ENCODE measurements at regions of chr6 and their contacts with region 1.

Region 1: DNA sequence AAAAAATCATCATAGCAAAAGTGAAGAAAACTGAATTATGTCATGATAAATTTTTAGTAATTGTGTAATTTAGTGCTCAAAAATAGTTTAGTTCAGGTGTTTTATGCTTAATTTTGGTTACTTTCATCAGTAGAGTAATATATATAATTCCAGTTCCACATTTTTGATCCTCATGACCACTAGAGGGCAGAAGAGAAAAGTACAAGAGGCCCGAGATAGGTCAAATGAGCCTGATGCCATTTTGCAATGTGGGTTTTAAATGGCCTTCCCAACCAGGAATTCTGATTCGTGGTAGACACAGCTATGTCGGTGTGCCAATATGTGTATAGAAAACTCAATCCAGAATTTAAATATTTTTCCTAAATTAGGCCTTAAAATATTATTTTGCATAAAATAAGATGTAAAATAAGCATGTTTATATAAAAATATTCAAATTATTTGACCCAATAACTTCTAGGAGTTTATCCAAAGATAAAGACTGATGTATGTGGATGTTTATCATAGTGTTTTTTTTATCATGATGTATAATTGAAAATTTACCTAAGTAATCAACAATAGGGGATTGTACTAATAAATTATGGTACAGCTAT is 159.7 kb upstream of the RPS6KA2 start:
- DNase-seq: peak; percentile 37
- H3K4me3 Mint-ChIP-seq: no peak overlapping the region
- H3K27ac Mint-ChIP-seq: no peak overlapping the region
- H3K4me1 Mint-ChIP-seq: no peaks in the 10 kb centered on the region
- H3K27me3 Mint-ChIP-seq: peaks cover 25% of the 10 kb centered on the region
- CTCF ChIP-seq: peak; percentile 58

Region 2: DNA sequence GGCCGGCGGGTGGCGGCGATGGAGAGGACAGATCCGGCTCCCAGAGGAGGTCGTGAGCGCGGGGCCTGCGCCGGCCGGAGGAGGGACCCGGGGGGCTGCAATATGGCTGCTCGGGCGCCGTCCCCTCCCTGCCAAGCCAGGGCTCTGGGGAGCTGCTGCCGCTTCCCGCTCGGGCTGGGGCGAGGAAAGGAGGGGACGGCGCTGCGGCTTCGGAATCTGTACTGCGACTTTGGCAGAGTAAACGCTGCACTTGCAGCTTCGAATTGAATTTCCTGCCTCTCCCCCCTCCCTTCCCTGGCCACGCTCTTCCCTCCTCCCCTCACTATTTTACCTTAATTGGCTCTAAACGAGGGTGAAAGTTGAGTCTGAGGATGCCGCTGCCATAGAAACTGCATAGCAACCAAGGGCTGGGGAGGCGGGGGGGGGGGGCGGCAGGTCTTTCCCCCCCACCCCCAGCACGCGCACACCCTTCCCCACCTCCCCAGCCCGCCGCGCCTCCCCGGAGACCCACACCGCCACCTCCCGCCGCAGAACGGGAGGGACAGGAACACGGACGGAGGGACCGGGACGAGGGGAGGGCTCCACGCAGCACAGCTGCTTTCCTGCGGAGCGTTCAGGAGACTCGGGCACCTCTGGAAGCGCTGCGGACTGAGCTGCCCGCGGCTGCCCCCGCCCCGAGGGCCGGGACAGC is 75.6 kb after region 1 on chr6:
- CTCF ChIA-PET with region 1: no interaction called
- intact Hi-C with region 1: loop called (anchors 5 kb)
- DNase-seq: peak; percentile 39
- H3K4me3 Mint-ChIP-seq: peak overlapping the region; percentile 80
- H3K27ac Mint-ChIP-seq: no peak overlapping the region
- H3K4me1 Mint-ChIP-seq: no peaks in the 10 kb centered on the region
- H3K27me3 Mint-ChIP-seq: peaks cover 53% of the 10 kb centered on the region
- CTCF ChIP-seq: no peak

Region 3: DNA sequence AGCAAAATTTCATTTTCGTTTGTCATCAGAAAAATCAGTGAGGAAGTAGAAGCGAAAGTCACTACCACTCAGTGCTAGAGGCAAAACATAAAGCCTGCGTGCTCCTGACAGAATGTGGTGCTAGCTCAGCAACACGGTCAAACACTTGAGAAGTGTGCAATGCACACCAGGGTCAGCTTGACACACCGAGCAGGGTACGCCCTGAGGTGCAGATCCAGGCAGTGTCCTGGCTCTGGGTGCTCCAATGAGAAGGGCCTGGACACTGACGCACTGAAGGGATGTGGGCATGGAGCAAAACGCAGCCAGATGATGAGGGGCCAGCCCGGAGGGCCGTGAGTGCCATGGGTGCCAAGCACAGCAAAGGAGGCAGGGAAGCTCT is 163.6 kb after region 1 on chr6:
- CTCF ChIA-PET with region 1: interaction called, 14 read pairs
- intact Hi-C with region 1: loop called (anchors 1 kb)
- DNase-seq: no peak
- H3K4me3 Mint-ChIP-seq: peak overlapping the region; percentile 37
- H3K27ac Mint-ChIP-seq: peak overlapping the region; percentile 69
- H3K4me1 Mint-ChIP-seq: peaks cover 24% of the 10 kb centered on the region
- H3K27me3 Mint-ChIP-seq: no peaks in the 10 kb centered on the region
- CTCF ChIP-seq: no peak

Region 4: GRCh38 chr6:166989427-166990032 is 202.7 kb after region 1 on chr6:
- CTCF ChIA-PET with region 1: no interaction called
- intact Hi-C with region 1: loop called (anchors 2 kb)
- DNase-seq: peak; percentile 4
- H3K4me3 Mint-ChIP-seq: no peak overlapping the region
- H3K27ac Mint-ChIP-seq: no peak overlapping the region
- H3K4me1 Mint-ChIP-seq: no peaks in the 10 kb centered on the region
- H3K27me3 Mint-ChIP-seq: no peaks in the 10 kb centered on the region
- CTCF ChIP-seq: peak; percentile 17

Region 5: DNA sequence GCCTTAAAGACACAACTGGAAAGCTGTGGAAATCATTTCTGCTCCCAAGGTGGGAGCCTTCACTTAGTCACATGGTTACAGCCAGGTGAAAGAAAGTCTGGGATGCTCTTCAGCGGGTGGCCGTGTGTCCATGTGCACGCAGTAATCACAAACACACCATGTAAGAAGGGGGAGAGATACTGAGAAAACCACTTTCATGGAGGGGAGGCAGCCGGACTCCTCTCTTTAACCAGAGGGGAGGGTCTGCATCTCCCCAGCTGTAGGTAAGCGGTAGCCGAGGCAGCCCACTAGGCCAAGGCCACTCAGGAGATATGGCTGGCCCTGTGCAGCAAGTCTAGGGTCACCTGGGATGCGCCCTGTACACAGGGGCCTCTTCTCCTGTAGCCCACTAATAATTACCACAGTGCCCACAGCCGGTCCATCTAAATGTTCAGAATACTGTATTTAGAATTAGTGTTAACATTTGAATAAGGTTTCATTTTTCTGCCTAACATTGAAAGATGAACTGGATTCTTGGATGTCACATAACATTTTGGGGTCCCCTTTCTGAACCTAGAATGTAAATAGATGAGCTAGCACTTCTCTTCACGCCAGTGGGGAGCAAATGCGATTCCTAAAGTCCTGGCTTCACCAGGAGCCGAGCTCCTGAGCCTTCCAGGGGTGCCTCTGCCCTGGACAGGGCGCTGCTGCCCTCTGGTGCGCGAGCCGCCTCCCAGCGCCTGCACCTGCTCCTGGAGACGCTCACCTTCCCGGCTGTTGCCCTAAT is 355.1 kb after region 1 on chr6:
- CTCF ChIA-PET with region 1: no interaction called
- intact Hi-C with region 1: loop called (anchors 1 kb)
- DNase-seq: peak; percentile 76
- H3K4me3 Mint-ChIP-seq: no peak overlapping the region
- H3K27ac Mint-ChIP-seq: no peak overlapping the region
- H3K4me1 Mint-ChIP-seq: peaks cover 8% of the 10 kb centered on the region
- H3K27me3 Mint-ChIP-seq: peaks cover 61% of the 10 kb centered on the region
- CTCF ChIP-seq: peak; percentile 51

Measured in Calu3 (cell line).